ENCODE measurements at regions of chr19 and their contacts with region 1.

Region 1: DNA sequence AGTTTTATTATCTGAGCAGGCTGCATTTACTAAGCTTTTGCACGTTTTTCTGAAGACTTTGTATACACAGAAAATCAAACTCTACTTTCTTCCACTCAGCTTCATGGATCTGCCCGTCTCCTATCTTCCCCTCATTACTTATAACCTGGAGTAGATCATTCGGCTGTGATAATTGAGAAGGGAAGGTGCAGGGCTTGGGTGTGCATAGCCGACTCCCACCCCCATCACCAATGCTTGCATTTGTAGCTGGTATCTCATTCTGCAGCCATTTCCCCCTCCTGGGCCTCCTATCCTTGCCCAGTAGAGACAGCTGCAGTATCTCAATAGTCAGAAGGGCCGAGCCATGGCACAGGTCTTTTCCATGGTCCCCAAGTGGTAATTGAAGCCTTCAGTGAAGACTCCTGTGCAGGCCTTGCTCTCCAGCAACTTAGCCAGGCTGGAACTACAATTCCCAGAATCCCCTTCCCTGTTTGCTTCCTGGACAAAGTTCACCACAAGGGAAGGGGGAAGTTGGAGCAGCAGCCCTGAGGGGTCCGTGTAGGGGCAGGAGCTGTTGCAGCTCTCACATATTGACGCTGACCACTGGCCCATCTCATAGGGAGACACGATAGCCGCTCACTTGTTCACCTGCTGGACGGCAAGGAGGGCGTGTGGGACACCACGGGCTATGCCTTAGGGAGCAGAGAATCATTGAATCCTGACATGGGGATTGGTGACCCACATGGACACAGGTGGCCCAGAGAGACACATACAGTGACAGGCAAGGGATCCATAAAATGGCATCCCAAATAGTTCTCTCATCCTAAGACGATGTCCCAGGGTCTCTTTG is 2.1 kb upstream of the SIGLEC8 start:
- H3K4me3 ChIP-seq: no peak overlapping the region
- H3K27ac ChIP-seq: no peak overlapping the region
- H3K4me1 ChIP-seq: no peaks in the 10 kb centered on the region
- CTCF ChIP-seq: no peak

Region 2: GRCh38 chr19:51427201-51427600 is 33.2 kb before region 1 on chr19:
- CTCF ChIA-PET with region 1: no interaction called
- POLR2A ChIA-PET with region 1: no interaction called
- H3K4me3 ChIP-seq: no peak overlapping the region
- H3K27ac ChIP-seq: no peak overlapping the region
- H3K4me1 ChIP-seq: no peaks in the 10 kb centered on the region
- CTCF ChIP-seq: no peak

Region 3: DNA sequence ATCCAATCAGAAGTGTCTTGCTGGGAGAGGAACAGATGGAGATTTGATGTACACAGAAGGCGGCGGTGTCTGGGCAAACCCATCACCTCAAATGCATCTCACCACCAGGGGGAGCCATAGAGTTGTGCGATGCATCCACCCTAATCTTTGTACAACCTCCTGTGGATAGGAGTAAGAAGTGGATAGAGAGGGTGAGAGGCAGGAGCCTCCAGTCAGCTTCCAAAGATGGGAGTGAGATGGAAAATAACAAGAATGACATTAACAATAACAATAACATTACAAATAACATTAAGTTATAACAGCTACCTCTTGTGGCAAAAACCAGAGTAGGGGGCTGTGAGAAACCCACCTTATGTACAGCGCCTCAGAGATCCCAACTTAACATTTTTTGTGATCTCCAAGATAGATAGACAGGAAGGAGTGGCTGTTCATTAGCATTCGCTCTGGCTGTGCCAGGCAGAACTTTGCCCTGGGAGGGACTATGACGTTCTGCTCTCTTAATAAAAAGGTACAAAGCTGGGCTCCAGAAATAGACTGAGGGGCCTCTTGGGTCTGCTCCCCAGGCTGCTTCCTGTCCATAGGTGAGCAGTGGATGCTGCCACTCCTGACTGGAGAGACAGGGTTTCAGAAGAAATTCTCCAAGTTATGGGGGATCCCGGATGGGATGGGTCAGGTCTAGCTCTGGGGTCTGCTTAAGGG is 12.8 kb after region 1 on chr19:
- CTCF ChIA-PET with region 1: interaction called, 21 read pairs
- POLR2A ChIA-PET with region 1: no interaction called
- H3K4me3 ChIP-seq: no peak overlapping the region
- H3K27ac ChIP-seq: no peak overlapping the region
- H3K4me1 ChIP-seq: no peaks in the 10 kb centered on the region
- CTCF ChIP-seq: peak; percentile 71

Region 4: GRCh38 chr19:51552996-51553725 is 92.8 kb after region 1 on chr19:
- CTCF ChIA-PET with region 1: no interaction called
- POLR2A ChIA-PET with region 1: no interaction called
- H3K4me3 ChIP-seq: no peak overlapping the region
- H3K27ac ChIP-seq: no peak overlapping the region
- H3K4me1 ChIP-seq: no peaks in the 10 kb centered on the region
- CTCF ChIP-seq: no peak